GM12878 (cell line): ENCODE measurements at regions of chr3 and their contacts with region 1.

Region 1: DNA sequence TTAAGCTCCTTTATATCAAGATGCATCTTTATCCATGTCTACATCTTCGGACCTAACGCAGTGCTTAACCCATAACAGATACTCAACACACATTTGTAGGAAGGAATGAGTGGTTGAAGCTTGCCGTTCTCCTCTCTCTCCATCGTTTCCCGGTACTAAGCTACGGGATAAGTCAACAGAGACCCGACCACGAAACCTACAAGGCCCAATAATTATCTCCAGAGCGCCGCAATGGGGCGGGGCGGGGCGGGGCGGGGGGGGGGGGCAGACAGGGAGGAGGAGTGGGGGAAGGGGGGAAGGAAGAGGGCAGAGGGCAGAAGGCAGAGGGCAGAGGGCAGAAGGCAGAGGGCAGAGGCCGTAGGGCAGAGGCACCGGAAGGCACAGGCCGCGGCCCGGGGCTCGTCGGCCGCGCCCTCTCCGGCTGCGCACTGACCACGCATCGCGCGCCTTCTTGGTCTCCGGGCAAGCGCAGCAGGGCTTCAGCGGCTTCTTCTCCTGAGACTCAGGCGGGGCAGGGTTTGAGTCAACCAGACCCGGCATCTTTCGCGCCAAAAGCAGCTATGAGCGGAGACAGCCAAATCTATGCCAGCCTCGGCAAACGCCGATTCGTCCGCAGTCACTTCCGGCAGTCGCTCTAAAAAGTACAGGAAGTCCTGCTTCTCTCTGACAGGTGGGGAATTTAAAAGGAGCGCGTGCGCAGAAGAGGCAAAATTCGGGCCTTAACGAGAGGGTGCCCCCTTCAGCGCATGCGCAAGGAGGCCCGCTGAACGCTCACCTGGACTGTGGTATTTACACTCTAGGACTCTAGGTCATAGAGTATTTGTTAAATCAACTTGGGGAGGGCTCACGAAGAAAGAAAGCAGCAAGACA is at the start of gene COX17:
- DNase-seq: peak; percentile 99
- ATAC-seq: peak; percentile 88
- H3K4me3 ChIP-seq: peak within 1 kb of the TSS; percentile 90
- H3K27ac ChIP-seq: peak within 1 kb of the TSS; percentile 95
- H3K4me1 ChIP-seq: peaks cover 6% of the 10 kb centered on the region
- H3K27me3 ChIP-seq: no peaks in the 10 kb centered on the region
- CTCF ChIP-seq: no peak
- EP300 ChIP-seq: 0 out of 4 replicates have a peak, but pooled peaks have one; percentile 3 to 28
- POLR2A ChIP-seq: peak; percentile 87
- RAD21 ChIP-seq: no peak
- polyA plus RNA-seq, gene COX17: 615 to 717 TPM

Region 2: GRCh38 chr3:119240591-119241434 is 436.2 kb before region 1 on chr3 and contains the start of gene B4GALT4:
- CTCF ChIA-PET with region 1: interaction called, 16 read pairs
- POLR2A ChIA-PET with region 1: no interaction called
- RAD21 ChIA-PET with region 1: interaction called, 18 read pairs
- SMC1A ChIA-PET with region 1: interaction called, 9 read pairs
- in situ Hi-C with region 1: no loop called
- intact Hi-C with region 1: loop called (anchors 1 kb)
- DNase-seq: no peak
- ATAC-seq: peak; percentile 94
- H3K4me3 ChIP-seq: peak within 1 kb of the TSS; percentile 98
- H3K27ac ChIP-seq: peak within 1 kb of the TSS; percentile 88
- H3K4me1 ChIP-seq: peaks cover 4% of the 10 kb centered on the region; the same call in 1 of the 2 replicates
- H3K27me3 ChIP-seq: no peaks in the 10 kb centered on the region
- CTCF ChIP-seq: no peak
- EP300 ChIP-seq: no peak
- POLR2A ChIP-seq: peak; percentile 98
- RAD21 ChIP-seq: no peak
- polyA plus RNA-seq, gene B4GALT4: 13.8 to 15.4 TPM

Region 3: GRCh38 chr3:119352849-119353502 is 324.0 kb before region 1 on chr3:
- CTCF ChIA-PET with region 1: interaction called, 16 read pairs
- POLR2A ChIA-PET with region 1: interaction called, 4 read pairs
- RAD21 ChIA-PET with region 1: interaction called, 10 read pairs
- SMC1A ChIA-PET with region 1: interaction called, 15 read pairs
- in situ Hi-C with region 1: no loop called
- intact Hi-C with region 1: no loop called
- DNase-seq: no peak
- ATAC-seq: peak; percentile 62
- H3K4me3 ChIP-seq: no peak overlapping the region
- H3K27ac ChIP-seq: peak overlapping the region; percentile 53
- H3K4me1 ChIP-seq: peaks cover 40% of the 10 kb centered on the region
- H3K27me3 ChIP-seq: no peaks in the 10 kb centered on the region
- CTCF ChIP-seq: peak; percentile 34 to 42 (median 34); a peak in 4 of 6 replicates
- EP300 ChIP-seq: no peak
- POLR2A ChIP-seq: no peak
- RAD21 ChIP-seq: peak; percentile 72

Region 4: DNA sequence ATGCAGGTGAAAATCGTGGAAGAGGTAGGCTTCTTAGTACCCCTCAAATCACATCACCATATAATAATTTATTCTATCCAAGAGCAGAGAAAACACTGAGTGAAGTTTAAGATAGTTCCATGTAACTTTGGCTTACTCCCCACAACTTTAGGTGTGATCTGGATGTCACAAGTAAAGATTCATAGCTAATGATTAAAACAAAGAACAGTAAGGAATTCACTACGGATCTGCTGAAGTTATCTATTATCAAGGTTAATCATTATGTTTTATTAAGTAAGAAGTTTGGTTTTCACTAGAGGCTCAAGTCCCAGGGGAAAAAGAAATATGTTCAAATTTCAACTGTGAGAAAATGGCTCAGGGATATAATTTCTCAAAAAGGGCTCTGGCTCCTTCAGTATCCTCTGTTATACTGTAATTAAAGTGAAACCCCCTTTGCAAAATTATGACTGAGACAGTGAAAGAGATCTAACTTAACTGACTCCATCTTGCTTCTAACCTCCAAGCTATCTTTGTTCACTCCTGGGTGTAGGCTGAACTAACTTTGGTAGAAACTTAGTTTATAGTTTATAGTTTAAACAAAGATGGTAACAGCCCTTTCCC is 134.7 kb before region 1 on chr3:
- CTCF ChIA-PET with region 1: interaction called, 14 read pairs
- POLR2A ChIA-PET with region 1: interaction called, 3 read pairs
- RAD21 ChIA-PET with region 1: interaction called, 3 read pairs
- SMC1A ChIA-PET with region 1: interaction called, 3 read pairs
- in situ Hi-C with region 1: no loop called
- intact Hi-C with region 1: no loop called
- DNase-seq: no peak
- ATAC-seq: peak; percentile 26
- H3K4me3 ChIP-seq: 0 out of 2 replicates have a peak overlapping the region, but pooled peaks have one; percentile 17
- H3K27ac ChIP-seq: peak overlapping the region; percentile 55
- H3K4me1 ChIP-seq: peaks cover 16% of the 10 kb centered on the region
- H3K27me3 ChIP-seq: no peaks in the 10 kb centered on the region
- CTCF ChIP-seq: no peak
- EP300 ChIP-seq: no peak
- POLR2A ChIP-seq: no peak
- RAD21 ChIP-seq: no peak

Region 5: DNA sequence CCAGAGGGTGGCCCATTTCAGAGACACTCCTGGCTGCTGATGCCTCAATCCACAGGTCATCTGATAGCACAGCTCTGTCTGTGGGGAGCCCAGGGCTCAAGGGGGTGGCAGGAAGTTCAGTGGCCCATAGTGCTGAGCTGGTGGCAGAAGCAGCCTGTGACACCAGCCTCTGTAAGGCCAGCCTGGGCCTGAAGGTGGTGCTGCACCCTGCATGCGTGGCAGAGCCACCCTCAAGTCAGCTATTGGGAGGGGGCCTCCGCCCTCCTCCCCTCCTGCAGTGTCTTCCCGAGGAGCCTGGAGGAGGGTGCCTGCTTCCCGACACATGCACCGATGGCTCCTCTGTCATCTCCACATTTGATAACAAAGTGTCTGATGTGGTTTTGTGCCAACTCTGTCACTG is 76.3 kb before region 1 on chr3:
- CTCF ChIA-PET with region 1: interaction called, 296 read pairs
- POLR2A ChIA-PET with region 1: interaction called, 104 read pairs
- RAD21 ChIA-PET with region 1: interaction called, 158 read pairs
- SMC1A ChIA-PET with region 1: interaction called, 329 read pairs
- in situ Hi-C with region 1: loop called (anchors 5 kb)
- intact Hi-C with region 1: loop called (anchors 1 kb)
- DNase-seq: peak; percentile 85
- ATAC-seq: peak; percentile 81
- H3K4me3 ChIP-seq: no peak overlapping the region
- H3K27ac ChIP-seq: peak overlapping the region; percentile 87
- H3K4me1 ChIP-seq: peaks cover 62% of the 10 kb centered on the region
- H3K27me3 ChIP-seq: no peaks in the 10 kb centered on the region
- CTCF ChIP-seq: peak; percentile 88 to 96 (median 91); a peak in 5 of 6 replicates
- EP300 ChIP-seq: no peak
- POLR2A ChIP-seq: peak; percentile 66
- RAD21 ChIP-seq: peak; percentile 82

Region 6: GRCh38 chr3:119662604-119663373 is 14.2 kb before region 1 on chr3:
- CTCF ChIA-PET with region 1: interaction called, 16 read pairs
- POLR2A ChIA-PET with region 1: interaction called, 25 read pairs
- RAD21 ChIA-PET with region 1: interaction called, 44 read pairs
- SMC1A ChIA-PET with region 1: interaction called, 100 read pairs
- in situ Hi-C with region 1: no loop called
- intact Hi-C with region 1: no loop called
- DNase-seq: no peak
- ATAC-seq: peak; percentile 45
- H3K4me3 ChIP-seq: no peak overlapping the region
- H3K27ac ChIP-seq: peak overlapping the region; percentile 38
- H3K4me1 ChIP-seq: peaks cover 30% of the 10 kb centered on the region
- H3K27me3 ChIP-seq: no peaks in the 10 kb centered on the region
- CTCF ChIP-seq: no peak; a peak in 1 of 6 replicates
- EP300 ChIP-seq: no peak
- POLR2A ChIP-seq: no peak
- RAD21 ChIP-seq: no peak; the same call in 1 of the 2 replicates

Region 7: GRCh38 chr3:120033596-120033995 is 356.6 kb after region 1 on chr3:
- CTCF ChIA-PET with region 1: no interaction called
- POLR2A ChIA-PET with region 1: no interaction called
- RAD21 ChIA-PET with region 1: no interaction called
- SMC1A ChIA-PET with region 1: no interaction called
- in situ Hi-C with region 1: no loop called
- intact Hi-C with region 1: no loop called
- DNase-seq: no peak
- ATAC-seq: no peak
- H3K4me3 ChIP-seq: no peak overlapping the region
- H3K27ac ChIP-seq: no peak overlapping the region
- H3K4me1 ChIP-seq: no peaks in the 10 kb centered on the region
- H3K27me3 ChIP-seq: no peaks in the 10 kb centered on the region
- CTCF ChIP-seq: no peak
- EP300 ChIP-seq: no peak
- POLR2A ChIP-seq: no peak
- RAD21 ChIP-seq: no peak